T-cell (primary cell): ENCODE measurements at regions of chr6 and their contacts with region 1.

Region 1: DNA sequence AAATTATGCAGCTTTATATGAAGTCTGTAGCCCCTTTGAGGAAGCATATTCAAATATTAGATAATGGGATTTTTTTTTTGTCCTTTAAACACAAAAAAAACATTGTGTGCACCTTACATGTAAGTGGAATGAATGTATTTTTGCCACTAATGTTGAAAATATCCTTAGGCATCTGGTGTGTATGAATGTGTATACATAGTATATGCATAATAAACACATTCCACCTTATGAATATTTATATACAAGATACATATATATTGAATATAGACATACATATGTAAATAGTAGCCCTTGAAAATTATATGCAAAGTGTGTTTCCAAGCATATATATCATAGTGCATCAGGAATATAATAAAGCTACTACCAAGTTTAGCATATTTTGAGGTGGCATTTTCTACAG is 94.8 kb downstream of the SOBP start:
- DNase-seq: no peak
- ATAC-seq: no peak
- H3K4me3 ChIP-seq: no peak overlapping the region
- H3K4me3 Mint-ChIP-seq: no peak overlapping the region
- H3K27ac ChIP-seq: no peak overlapping the region
- H3K27ac Mint-ChIP-seq: no peak overlapping the region
- H3K4me1 ChIP-seq: no peaks in the 10 kb centered on the region
- H3K4me1 Mint-ChIP-seq: no peaks in the 10 kb centered on the region
- H3K27me3 ChIP-seq: no peaks in the 10 kb centered on the region
- H3K27me3 Mint-ChIP-seq: peaks cover 13 to 15% of the 10 kb centered on the region in 2 donors

Region 2: GRCh38 chr6:108091288-108091687 is 506.6 kb after region 1 on chr6:
- CTCF ChIA-PET with region 1: no interaction called
- POLR2A ChIA-PET with region 1: interaction called in 1 of 2 experiments, 10 read pairs
- DNase-seq: no peak
- ATAC-seq: no peak
- H3K4me3 ChIP-seq: no peak overlapping the region
- H3K4me3 Mint-ChIP-seq: no peak overlapping the region
- H3K27ac ChIP-seq: no peak overlapping the region
- H3K27ac Mint-ChIP-seq: no peak overlapping the region
- H3K4me1 ChIP-seq: no peaks in the 10 kb centered on the region
- H3K4me1 Mint-ChIP-seq: no peaks in the 10 kb centered on the region
- H3K27me3 ChIP-seq: peaks cover 0 to 16% of the 10 kb centered on the region in 2 experiments
- H3K27me3 Mint-ChIP-seq: peaks cover 24 to 31% of the 10 kb centered on the region in 2 donors